MCF 10A (cell line): ENCODE measurements at regions of chr14 and their contacts with region 1.

Region 1: DNA sequence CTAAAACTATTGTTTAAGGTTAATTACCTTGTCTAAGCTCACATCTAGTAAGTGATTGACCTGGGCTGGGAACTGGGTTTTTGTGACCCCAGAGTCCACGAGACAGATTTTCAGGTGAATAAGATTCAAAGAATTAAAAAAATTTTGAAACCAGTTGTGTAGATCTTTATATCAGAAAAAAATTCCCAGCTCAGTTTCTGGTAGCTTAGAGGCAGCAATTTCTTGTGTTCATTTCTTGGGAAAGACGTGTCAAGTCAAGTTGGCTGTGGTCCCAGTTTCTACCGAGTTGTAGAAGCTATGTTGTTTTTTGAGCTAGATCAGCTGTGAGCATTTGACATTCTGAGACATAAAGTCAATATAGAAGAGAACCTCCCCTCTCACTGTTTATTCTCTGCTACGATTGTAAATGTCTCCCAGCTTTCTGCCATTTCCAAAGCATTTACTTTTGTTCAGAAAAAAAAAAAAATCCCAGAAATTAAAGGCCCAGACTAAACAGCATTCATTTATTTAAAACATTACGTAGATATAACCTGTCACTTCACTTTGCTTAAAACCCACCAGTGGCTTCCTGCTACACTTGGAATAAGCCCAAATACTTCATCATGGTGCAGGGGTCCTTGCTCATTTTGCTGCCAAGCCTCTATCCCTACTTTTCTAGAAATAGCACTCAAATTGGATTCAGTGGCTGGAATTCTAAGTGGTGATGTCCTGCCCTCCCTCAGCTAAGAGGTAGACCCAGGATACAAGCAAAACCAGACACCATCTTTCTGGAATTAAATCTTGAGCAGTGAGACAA is 20.5 kb upstream of the PYGL start:
- DNase-seq: peak; percentile 96
- H3K4me3 Mint-ChIP-seq: no peak overlapping the region
- H3K27ac Mint-ChIP-seq: peak overlapping the region; percentile 29
- H3K4me1 Mint-ChIP-seq: peaks cover 16% of the 10 kb centered on the region
- H3K27me3 Mint-ChIP-seq: no peaks in the 10 kb centered on the region
- CTCF ChIP-seq: no peak

Region 2: DNA sequence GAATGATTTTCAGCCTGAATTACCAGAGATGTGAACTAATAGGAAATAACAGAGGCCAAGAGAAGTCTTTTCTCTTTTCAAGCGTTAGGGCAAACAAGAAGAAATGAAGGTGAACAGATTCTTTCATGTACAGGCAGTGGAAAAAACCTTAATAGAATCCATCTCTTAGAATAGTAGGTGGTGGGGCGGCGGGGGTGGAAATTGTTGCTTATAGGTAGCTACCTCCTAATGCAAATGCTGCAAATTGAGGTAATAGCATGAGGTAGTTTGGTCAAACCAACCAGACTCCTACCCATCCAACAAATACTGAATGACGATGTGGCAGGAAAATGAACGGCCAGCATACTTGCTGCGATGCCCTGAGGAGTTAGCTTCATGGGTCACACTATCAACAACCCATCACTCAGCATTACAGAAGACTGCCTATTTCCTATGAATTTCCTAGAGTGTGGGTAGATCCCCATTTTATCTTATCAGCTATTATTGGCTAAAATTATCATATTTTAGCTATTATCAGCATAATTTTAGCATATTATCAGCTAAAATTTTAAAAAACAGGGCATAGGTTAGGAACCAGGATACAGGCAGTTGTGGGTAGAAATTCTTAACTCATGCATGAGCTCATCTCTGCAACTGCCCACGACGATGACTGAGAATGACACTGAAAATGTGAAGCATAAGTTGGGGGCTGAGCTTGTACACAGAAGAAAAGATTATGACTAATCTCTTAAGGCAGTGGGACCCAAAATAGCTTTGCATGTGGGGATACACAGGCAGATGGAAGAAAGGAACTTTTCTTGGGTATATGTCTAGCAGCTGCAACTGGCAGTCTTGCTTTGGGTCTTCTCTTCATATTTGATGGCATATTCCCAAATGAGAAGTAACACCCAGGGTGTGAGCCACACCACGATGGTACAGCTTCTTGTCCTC is 202.5 kb before region 1 on chr14:
- CTCF ChIA-PET with region 1: no interaction called
- POLR2A ChIA-PET with region 1: no interaction called
- intact Hi-C with region 1: no loop called
- DNase-seq: peak; percentile 50
- H3K4me3 Mint-ChIP-seq: no peak overlapping the region
- H3K27ac Mint-ChIP-seq: no peak overlapping the region
- H3K4me1 Mint-ChIP-seq: no peaks in the 10 kb centered on the region
- H3K27me3 Mint-ChIP-seq: no peaks in the 10 kb centered on the region
- CTCF ChIP-seq: no peak

Region 3: DNA sequence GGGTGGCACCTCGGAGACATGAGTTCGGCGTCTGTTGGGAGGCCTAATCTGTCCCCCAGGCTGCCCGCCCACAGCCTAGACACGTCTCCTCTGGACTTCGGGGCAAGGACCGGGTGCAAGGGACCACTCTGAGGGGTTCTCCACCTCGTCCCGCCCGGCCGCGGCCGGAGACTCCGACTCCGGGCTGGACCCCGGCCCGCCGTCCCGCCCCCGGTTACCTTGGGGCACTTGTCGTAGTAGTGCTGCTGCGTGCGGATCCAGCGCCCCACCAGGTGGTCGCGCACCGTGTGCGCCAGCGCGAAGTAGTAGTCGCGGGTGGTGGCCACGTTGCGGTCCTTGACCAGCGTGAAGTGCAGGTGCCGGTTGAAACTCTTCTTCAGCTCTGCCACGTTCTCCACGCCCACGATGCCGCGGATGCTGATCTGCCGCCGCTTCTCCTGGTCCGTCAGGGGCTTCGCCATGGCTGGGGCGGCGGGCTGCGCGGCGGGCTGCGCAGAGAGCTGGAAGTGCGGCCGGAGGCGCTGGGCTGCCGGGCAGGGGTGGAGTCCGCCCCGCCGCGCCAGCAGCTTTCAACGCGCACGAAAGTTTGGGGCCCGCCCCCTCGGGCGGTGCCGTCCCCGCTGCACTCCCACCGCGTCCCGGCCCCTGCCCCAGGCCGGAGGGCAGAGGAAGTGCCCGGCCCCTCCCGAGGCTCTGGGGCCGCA is 20.7 kb before region 1 on chr14 and contains the start of gene PYGL:
- CTCF ChIA-PET with region 1: interaction called, 5 read pairs
- POLR2A ChIA-PET with region 1: interaction called, 12 read pairs
- intact Hi-C with region 1: no loop called
- DNase-seq: peak; percentile 72
- H3K4me3 Mint-ChIP-seq: peak within 1 kb of the TSS; percentile 86
- H3K27ac Mint-ChIP-seq: peak within 1 kb of the TSS; percentile 84
- H3K4me1 Mint-ChIP-seq: peaks cover 33% of the 10 kb centered on the region
- H3K27me3 Mint-ChIP-seq: no peaks in the 10 kb centered on the region
- CTCF ChIP-seq: no peak
- total RNA-seq, gene PYGL: 75.4 and 87.3 TPM in 2 replicates

Region 4: DNA sequence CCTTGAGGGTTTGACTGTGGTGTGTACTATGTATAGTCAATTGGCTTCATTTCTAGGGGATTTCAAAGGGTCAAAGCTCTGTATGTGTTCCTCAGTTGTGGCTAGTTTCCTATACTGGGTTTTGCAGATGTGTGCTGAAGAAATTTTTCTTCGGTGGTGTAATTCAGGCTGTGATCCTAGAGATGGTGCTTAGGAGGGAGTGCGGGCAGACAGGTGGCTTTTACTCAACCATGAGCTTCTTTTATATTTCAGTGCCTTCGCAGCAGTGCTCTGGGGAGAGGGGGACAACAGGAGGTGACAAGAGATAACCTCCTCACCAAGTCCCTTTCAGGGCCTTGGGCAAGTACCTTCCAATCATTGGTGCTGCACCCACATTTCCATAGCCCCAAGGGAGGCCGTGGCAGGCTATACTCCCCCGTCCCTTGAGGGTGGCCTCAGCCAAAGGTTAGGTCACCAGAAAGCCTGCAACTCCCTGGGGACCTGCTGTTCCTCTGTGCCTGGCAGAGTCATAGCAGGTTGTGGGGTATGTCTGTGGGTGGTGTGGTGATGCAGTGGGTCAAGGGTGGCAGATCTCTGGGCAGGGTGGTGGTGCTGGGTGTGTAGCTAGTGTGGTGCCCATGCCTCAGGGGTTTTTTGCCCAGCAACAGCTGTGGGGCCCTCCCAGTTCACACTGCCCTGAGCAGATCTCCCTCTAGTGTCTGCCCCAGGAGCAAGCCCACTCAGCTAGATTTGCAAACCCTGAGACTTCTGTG is 238.3 kb after region 1 on chr14:
- CTCF ChIA-PET with region 1: no interaction called
- POLR2A ChIA-PET with region 1: no interaction called
- intact Hi-C with region 1: no loop called
- DNase-seq: no peak
- H3K4me3 Mint-ChIP-seq: no peak overlapping the region
- H3K27ac Mint-ChIP-seq: no peak overlapping the region
- H3K4me1 Mint-ChIP-seq: no peaks in the 10 kb centered on the region
- H3K27me3 Mint-ChIP-seq: peaks cover 54% of the 10 kb centered on the region
- CTCF ChIP-seq: no peak